A549 (cell line): ENCODE measurements at regions of chr11 and their contacts with region 1.

Region 1: DNA sequence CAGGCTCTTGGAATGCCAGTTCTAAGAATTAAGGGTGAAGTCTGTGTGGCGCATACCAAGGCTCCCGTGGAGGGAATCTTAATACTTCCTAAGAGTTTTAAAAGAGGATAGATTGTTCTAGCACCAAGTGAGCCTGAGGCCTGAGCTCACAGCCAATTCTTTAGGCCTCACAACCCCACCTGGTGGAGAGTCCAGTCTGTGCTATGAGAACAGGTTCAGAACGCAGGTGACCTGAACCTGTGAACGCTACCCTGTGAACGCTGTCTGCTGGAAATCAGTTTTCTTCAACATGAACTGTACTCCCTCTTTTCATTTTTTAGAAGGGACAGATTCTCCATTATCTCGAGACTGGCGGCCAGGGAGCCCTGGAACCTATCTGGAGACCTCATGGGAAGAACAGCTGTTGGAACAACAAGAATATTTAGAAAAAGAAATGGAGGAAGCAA is 43.2 kb upstream of the DLAT start:
- DNase-seq: peak; percentile 38 to 48
- ATAC-seq: peak; percentile 94; a peak in 5 of 6 replicates
- H3K4me3 ChIP-seq: no peak overlapping the region
- H3K27ac ChIP-seq: no peak overlapping the region
- H3K4me1 ChIP-seq: peaks cover 10% of the 10 kb centered on the region; the same call in 1 of the 3 replicates
- CTCF ChIP-seq: peak; percentile 50
- EP300 ChIP-seq: no peak
- POLR2A ChIP-seq: no peak
- RAD21 ChIP-seq: peak; percentile 59 to 62

Region 2: GRCh38 chr11:111659201-111660115 is 322.6 kb before region 1 on chr11:
- CTCF ChIA-PET with region 1: no interaction called
- POLR2A ChIA-PET with region 1: no interaction called
- DNase-seq: no peak
- ATAC-seq: no peak
- H3K4me3 ChIP-seq: no peak overlapping the region
- H3K27ac ChIP-seq: no peak overlapping the region
- H3K4me1 ChIP-seq: no peaks in the 10 kb centered on the region
- CTCF ChIP-seq: no peak
- EP300 ChIP-seq: no peak
- POLR2A ChIP-seq: no peak
- RAD21 ChIP-seq: no peak

Region 3: DNA sequence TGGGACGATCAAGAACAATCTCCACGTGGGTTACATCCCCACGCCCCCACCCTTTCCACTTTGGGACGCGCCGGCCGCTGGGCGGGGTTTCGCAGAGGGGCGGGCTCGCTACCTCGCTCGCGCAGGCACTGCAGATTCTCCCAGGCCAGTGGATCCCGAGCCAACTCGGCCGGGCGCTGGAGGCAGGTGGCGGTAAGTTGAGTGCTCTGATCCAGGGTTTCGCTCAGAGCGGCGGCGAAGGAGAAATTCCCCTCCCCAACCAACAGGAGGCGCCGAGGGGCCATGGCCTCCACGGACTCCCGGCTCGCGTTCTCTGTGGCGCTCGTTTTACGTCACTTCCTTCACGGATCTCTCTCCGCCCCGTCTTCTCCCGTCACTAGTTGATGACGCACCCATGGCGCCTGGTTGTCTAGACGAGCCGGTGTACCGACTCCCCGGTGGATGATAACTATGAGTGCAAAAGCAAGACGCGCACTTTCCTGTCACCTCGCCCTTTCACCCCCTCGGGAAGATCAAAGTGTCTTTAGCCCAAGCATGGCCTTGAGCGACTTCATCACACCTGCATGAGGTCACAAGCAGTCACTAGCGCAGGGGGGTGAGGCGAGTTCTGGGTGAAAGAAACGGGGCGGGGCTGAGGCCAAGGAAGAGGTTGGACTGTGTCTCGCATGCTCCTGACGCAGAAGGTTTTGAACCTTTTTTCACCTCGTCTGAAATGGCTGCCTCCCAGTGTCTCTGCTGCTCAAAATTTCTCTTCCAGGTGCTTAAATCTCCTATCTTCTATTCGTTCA is 103.0 kb before region 1 on chr11 and contains the starts of genes CFAP68 and FDXACB1:
- CTCF ChIA-PET with region 1: interaction called, 12 read pairs
- POLR2A ChIA-PET with region 1: no interaction called
- DNase-seq: peak; percentile 83 to 98
- ATAC-seq: peak; percentile 96 to 97
- H3K4me3 ChIP-seq: peak within 1 kb of the TSS; percentile 78
- H3K27ac ChIP-seq: peak within 1 kb of the TSS; percentile 80 to 99
- H3K4me1 ChIP-seq: peaks cover 9% of the 10 kb centered on the region; the same call in 1 of the 3 replicates
- CTCF ChIP-seq: peak; percentile 56
- EP300 ChIP-seq: no peak
- POLR2A ChIP-seq: peak; percentile 18; the same call in 1 of the 2 replicates
- RAD21 ChIP-seq: peak; percentile 69 to 81
- polyA plus RNA-seq, gene CFAP68: 59.7 and 84.6 TPM in 2 replicates
- polyA plus RNA-seq, gene FDXACB1: 2.4 and 3.0 TPM in 2 replicates

Region 4: DNA sequence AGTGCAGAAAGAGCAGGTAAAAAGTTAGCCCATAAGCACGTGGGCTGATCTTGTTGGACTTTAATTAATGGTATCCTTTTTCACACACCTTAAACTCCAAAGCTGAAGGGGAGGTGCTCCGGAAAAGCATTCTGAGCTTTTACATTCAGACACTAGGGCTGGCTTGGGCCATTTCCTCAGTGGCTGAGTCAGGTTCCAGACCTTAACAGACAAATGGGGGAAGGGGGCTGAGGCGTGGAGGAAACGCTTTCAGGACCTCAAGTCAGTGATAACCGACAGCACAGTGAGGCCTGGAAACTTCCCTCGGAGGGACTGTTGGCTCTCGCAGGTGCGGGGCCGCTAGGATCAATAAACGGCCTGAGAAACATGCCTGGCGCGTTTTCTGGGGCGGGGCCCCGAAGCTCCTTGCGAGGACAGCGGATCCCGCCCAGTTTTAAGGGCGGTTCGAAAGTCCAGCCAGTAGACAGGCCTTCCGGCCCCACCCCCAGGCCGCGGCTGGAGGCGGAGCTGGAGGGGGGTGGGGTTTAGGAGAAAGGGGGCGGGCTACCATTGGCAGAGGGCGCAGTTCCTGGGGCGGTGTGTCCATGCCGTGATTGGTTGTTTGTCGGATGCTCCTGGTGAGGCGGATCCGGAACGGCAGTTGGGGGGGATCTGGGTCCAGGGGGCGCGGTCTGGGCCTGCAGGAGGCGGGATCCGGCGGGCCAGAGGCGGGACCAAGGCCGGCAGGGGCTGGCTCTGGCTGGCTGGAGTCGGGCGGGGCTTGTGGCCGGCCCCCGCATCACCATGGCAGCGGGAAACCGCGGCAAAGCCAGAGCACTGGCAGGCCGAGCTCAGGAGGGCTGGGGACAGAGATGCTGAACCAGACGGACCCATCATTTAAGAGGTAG is 55.3 kb before region 1 on chr11:
- CTCF ChIA-PET with region 1: interaction called, 172 read pairs
- POLR2A ChIA-PET with region 1: interaction called, 3 read pairs
- DNase-seq: peak; percentile 85 to 93
- ATAC-seq: peak; percentile 91 to 93
- H3K4me3 ChIP-seq: peak overlapping the region; percentile 38
- H3K27ac ChIP-seq: peak overlapping the region; percentile 73 to 92
- H3K4me1 ChIP-seq: peaks cover 44% of the 10 kb centered on the region
- CTCF ChIP-seq: no peak
- EP300 ChIP-seq: no peak
- POLR2A ChIP-seq: peak; percentile 63
- RAD21 ChIP-seq: no peak

Region 5: GRCh38 chr11:111938687-111939160 is 43.3 kb before region 1 on chr11:
- CTCF ChIA-PET with region 1: interaction called, 172 read pairs
- POLR2A ChIA-PET with region 1: interaction called, 3 read pairs
- DNase-seq: no peak
- ATAC-seq: peak; percentile 37 to 45; a peak in 4 of 6 replicates
- H3K4me3 ChIP-seq: peak overlapping the region; percentile 71
- H3K27ac ChIP-seq: peak overlapping the region; percentile 89 to 95
- H3K4me1 ChIP-seq: peaks cover 81% of the 10 kb centered on the region
- CTCF ChIP-seq: no peak
- EP300 ChIP-seq: no peak
- POLR2A ChIP-seq: no peak
- RAD21 ChIP-seq: no peak

Region 6: DNA sequence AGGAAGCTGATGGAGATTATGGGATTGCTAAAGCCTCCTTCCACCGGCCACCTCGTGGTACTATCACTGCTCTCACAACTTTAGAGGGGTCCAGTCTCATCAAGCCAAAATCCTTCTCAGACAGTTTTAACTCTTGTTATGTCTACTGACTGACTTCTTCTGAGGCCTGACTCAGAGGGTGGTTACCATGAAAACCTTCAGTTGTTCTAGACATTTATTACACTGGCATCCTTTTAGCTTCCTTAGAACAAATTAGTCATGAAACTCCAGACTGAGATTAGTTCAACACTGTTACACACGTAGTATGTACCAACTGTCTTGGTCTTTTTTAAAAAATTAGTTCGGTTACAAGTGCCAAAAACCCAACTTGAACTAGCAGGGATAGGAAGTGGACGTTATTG is 37.4 kb before region 1 on chr11:
- CTCF ChIA-PET with region 1: interaction called, 31 read pairs
- POLR2A ChIA-PET with region 1: no interaction called
- DNase-seq: peak in 1 of 2 experiments; percentile 57
- ATAC-seq: peak; percentile 72 to 76
- H3K4me3 ChIP-seq: no peak overlapping the region
- H3K27ac ChIP-seq: peak overlapping the region; percentile 83 to 85
- H3K4me1 ChIP-seq: peaks cover 54% of the 10 kb centered on the region
- CTCF ChIP-seq: no peak
- EP300 ChIP-seq: 0 out of 5 replicates have a peak, but pooled peaks of 1 of the 2 experiments have one; percentile 16
- POLR2A ChIP-seq: no peak
- RAD21 ChIP-seq: no peak

Region 7: DNA sequence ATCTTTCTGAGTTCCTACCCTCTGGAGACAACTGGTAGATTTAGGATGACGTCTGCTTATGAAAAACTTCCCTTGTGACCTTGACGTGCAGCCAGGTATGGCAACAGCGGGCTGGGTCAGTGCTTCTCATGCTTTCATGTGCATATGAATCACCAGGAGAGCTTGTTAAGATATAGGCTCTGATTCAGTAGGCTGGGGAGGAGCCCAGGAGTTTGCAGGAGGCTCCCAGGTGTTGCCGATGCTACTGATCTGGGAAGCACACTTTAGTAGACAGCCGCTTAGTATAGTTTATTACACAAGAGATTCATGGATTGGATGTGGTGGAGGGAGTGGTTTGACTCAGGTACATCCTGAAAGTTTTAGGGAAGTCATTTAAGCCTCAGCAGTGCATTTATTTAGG is 21.1 kb before region 1 on chr11:
- CTCF ChIA-PET with region 1: interaction called, 19 read pairs
- POLR2A ChIA-PET with region 1: no interaction called
- DNase-seq: peak in 1 of 2 experiments; percentile 18
- ATAC-seq: peak in 1 of 2 experiments; percentile 80; a peak in 4 of 6 replicates
- H3K4me3 ChIP-seq: no peak overlapping the region
- H3K27ac ChIP-seq: no peak overlapping the region
- H3K4me1 ChIP-seq: peaks cover 11% of the 10 kb centered on the region; the same call in 2 of the 3 replicates
- CTCF ChIP-seq: no peak
- EP300 ChIP-seq: no peak
- POLR2A ChIP-seq: no peak
- RAD21 ChIP-seq: no peak

Region 8: DNA sequence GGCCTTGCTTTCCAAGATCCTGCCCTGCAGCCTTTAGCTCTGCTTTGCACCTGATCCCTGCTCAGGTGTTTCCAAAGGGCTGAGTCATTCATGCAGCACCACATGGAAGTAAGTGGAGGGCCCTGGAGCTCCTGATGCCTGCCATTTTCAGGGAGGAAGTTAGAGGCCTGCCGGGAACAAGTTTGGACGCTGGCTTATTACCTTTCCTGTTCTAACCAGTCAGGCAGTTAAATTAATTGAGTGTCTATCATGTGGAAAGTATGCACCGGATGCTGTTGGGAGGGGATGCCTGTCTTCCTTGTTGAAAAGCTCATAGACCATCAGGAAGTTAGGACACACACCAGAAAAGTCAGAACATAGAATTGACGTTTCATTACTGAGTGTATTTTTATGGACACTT is 352.3 kb after region 1 on chr11:
- CTCF ChIA-PET with region 1: no interaction called
- POLR2A ChIA-PET with region 1: no interaction called
- DNase-seq: no peak
- ATAC-seq: no peak
- H3K4me3 ChIP-seq: no peak overlapping the region
- H3K27ac ChIP-seq: no peak overlapping the region
- H3K4me1 ChIP-seq: no peaks in the 10 kb centered on the region
- CTCF ChIP-seq: no peak
- EP300 ChIP-seq: no peak
- POLR2A ChIP-seq: no peak
- RAD21 ChIP-seq: no peak